Activated naive CD4-positive, alpha-beta T cell treated with anti-CD3 and anti-CD28 coated beads for 36 hours (primary cell): ENCODE measurements at regions of chr10 and their contacts with region 1.

Region 1: DNA sequence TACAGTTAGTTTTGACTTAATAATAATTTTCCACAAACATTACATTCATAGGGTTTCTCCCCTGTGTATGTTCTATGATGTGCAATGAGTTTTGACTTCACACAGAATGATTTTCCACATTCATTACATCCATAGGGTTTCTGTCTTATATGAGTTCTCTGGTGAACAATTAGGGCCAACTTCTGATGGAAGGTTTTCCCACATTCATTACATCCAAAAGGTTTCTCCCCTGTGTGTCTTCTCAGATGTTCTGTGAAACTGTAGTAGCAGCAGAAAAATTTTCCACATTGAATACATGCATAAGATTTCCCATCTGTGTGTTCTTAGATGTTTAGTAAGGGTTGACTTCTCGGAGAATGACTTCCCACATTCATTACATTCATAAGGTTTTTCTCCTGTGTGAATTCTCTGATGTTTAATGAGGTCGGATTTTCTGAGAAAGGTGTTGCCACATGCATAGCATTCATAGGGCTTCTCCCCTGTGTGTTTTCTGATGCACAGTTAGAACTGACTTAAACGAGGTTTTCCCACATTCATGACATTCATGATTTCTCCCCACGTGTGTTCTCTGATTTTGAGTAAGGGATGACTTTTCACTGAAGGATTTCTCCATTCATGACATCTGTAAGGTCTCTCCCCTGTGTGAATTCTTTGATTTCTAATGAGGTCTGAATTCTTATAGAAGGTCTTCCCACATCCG is 118.5 kb downstream of the ZNF33B start:
- DNase-seq: no peak
- H3K4me3 Mint-ChIP-seq: no peak overlapping the region
- H3K27ac Mint-ChIP-seq: no peak overlapping the region
- H3K4me1 Mint-ChIP-seq: peaks cover 2% of the 10 kb centered on the region
- H3K27me3 Mint-ChIP-seq: no peaks in the 10 kb centered on the region

Region 2: GRCh38 chr10:42454313-42454712 is 65.6 kb before region 1 on chr10:
- CTCF ChIA-PET with region 1: no interaction called
- intact Hi-C with region 1: no loop called
- DNase-seq: no peak
- H3K4me3 Mint-ChIP-seq: no peak overlapping the region
- H3K27ac Mint-ChIP-seq: no peak overlapping the region
- H3K4me1 Mint-ChIP-seq: no peaks in the 10 kb centered on the region
- H3K27me3 Mint-ChIP-seq: peaks cover 8% of the 10 kb centered on the region

Region 3: GRCh38 chr10:42594246-42594650 is 74.3 kb after region 1 on chr10:
- CTCF ChIA-PET with region 1: no interaction called
- intact Hi-C with region 1: loop called (anchors 10 kb)
- DNase-seq: no peak
- H3K4me3 Mint-ChIP-seq: no peak overlapping the region
- H3K27ac Mint-ChIP-seq: no peak overlapping the region
- H3K4me1 Mint-ChIP-seq: no peaks in the 10 kb centered on the region
- H3K27me3 Mint-ChIP-seq: no peaks in the 10 kb centered on the region